MCF 10A (cell line): ENCODE measurements at regions of chr16 and their contacts with region 1.

Region 1: GRCh38 chr16:24041826-24042631 is 206.2 kb downstream of the PRKCB start:
- DNase-seq: peak; percentile 74
- H3K4me3 Mint-ChIP-seq: no peak overlapping the region
- H3K27ac Mint-ChIP-seq: no peak overlapping the region
- H3K4me1 Mint-ChIP-seq: no peaks in the 10 kb centered on the region
- H3K27me3 Mint-ChIP-seq: peaks cover 33% of the 10 kb centered on the region
- CTCF ChIP-seq: peak; percentile 86

Region 2: DNA sequence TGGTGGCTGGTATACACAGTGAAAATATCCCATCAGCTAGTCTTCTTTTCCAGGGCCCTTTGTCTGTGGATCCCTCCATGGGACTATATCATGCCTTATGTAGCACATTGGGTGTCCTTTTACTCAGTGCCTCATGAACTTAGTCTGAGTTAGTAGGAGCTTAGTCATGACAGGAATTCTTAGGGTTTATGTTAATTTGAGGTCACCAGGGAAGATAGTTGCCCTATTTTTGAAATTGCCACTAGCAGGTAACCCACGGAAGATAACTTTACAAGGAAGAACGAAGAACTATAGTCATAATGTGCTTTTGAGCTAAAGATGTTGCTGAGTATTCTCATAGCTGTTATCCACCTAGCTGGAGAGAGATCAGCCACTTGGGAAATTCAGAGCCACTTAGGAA is 378.1 kb before region 1 on chr16:
- CTCF ChIA-PET with region 1: no interaction called
- POLR2A ChIA-PET with region 1: no interaction called
- intact Hi-C with region 1: no loop called
- DNase-seq: no peak
- H3K4me3 Mint-ChIP-seq: no peak overlapping the region
- H3K27ac Mint-ChIP-seq: no peak overlapping the region
- H3K4me1 Mint-ChIP-seq: no peaks in the 10 kb centered on the region
- H3K27me3 Mint-ChIP-seq: no peaks in the 10 kb centered on the region
- CTCF ChIP-seq: no peak

Region 3: DNA sequence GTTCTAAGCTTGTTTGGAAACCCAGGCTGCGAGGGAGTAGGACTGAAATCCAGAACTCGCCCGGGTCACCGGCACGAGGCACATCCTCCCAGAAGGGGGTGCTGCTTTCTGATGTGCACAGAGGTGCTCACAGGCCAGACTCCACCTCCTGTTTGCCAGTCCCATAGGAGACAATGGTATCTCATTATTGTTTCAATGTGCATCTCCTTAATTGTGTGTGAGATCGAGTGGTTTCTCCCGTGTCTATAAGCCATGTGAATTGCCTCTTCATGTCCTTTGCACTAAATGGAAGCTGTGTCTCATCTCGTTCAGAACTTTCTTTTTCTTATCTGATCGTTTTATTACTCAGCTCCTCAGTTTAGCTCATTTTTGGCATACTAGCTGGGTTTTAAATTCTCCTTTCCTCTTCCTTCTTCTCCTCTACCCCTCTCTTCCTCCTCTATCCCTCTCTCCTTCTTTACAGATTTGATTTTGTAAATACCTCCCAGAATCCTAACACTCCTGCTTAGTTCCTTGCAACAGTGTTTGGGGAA is 238.4 kb before region 1 on chr16:
- CTCF ChIA-PET with region 1: interaction called, 94 read pairs
- POLR2A ChIA-PET with region 1: no interaction called
- intact Hi-C with region 1: no loop called
- DNase-seq: peak; percentile 61
- H3K4me3 Mint-ChIP-seq: no peak overlapping the region
- H3K27ac Mint-ChIP-seq: peak overlapping the region; percentile 5
- H3K4me1 Mint-ChIP-seq: peaks cover 7% of the 10 kb centered on the region
- H3K27me3 Mint-ChIP-seq: no peaks in the 10 kb centered on the region
- CTCF ChIP-seq: peak; percentile 46

Region 4: GRCh38 chr16:23877107-23878090 is 164.6 kb before region 1 on chr16:
- CTCF ChIA-PET with region 1: no interaction called
- POLR2A ChIA-PET with region 1: no interaction called
- intact Hi-C with region 1: no loop called
- DNase-seq: no peak
- H3K4me3 Mint-ChIP-seq: no peak overlapping the region
- H3K27ac Mint-ChIP-seq: no peak overlapping the region
- H3K4me1 Mint-ChIP-seq: no peaks in the 10 kb centered on the region
- H3K27me3 Mint-ChIP-seq: no peaks in the 10 kb centered on the region
- CTCF ChIP-seq: no peak

Region 5: GRCh38 chr16:24070851-24071250 is 28.8 kb after region 1 on chr16:
- CTCF ChIA-PET with region 1: interaction called, 10 read pairs
- POLR2A ChIA-PET with region 1: no interaction called
- intact Hi-C with region 1: no loop called
- DNase-seq: peak; percentile 65
- H3K4me3 Mint-ChIP-seq: no peak overlapping the region
- H3K27ac Mint-ChIP-seq: no peak overlapping the region
- H3K4me1 Mint-ChIP-seq: peaks cover under 1% of the 10 kb centered on the region
- H3K27me3 Mint-ChIP-seq: peaks cover 25% of the 10 kb centered on the region
- CTCF ChIP-seq: peak; percentile 65

Region 6: GRCh38 chr16:24493859-24494258 is 451.8 kb after region 1 on chr16:
- CTCF ChIA-PET with region 1: interaction called, 508 read pairs
- POLR2A ChIA-PET with region 1: no interaction called
- intact Hi-C with region 1: loop called (anchors 1 kb)
- DNase-seq: peak; percentile 81
- H3K4me3 Mint-ChIP-seq: peak overlapping the region; percentile 28
- H3K27ac Mint-ChIP-seq: peak overlapping the region; percentile 75
- H3K4me1 Mint-ChIP-seq: peaks cover 19% of the 10 kb centered on the region
- H3K27me3 Mint-ChIP-seq: no peaks in the 10 kb centered on the region
- CTCF ChIP-seq: no peak

Region 7: DNA sequence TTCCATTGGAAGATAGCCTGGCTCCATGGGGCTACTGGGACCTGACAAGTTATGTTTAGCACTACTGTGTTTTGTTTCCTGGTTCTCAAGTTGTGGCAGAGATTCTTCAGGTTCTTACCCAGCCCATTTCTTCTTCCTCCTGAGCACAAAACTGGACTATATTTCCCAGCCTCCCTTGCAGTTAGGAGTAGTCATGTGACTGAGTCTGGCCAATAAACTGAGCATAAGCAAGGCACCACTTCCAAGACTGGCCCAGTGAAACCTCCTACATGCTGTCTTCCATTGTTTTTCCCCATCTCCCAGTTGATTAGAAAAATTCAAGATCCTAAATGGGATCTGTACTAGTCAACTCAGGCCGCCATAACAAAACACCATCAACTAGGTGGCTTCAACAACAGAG is 469.1 kb after region 1 on chr16:
- CTCF ChIA-PET with region 1: interaction called, 508 read pairs
- POLR2A ChIA-PET with region 1: interaction called, 3 read pairs
- intact Hi-C with region 1: no loop called
- DNase-seq: no peak
- H3K4me3 Mint-ChIP-seq: no peak overlapping the region
- H3K27ac Mint-ChIP-seq: no peak overlapping the region
- H3K4me1 Mint-ChIP-seq: no peaks in the 10 kb centered on the region
- H3K27me3 Mint-ChIP-seq: no peaks in the 10 kb centered on the region
- CTCF ChIP-seq: no peak